Posterior cingulate gyrus (tissue), 11 donors: ENCODE measurements at regions of chr1 and their contacts with region 1.

Region 1: GRCh38 chr1:154272217-154272998 is at the start of gene HAX1:
- DNase-seq: peak; percentile 83 to 97 (median 90)

Region 2: DNA sequence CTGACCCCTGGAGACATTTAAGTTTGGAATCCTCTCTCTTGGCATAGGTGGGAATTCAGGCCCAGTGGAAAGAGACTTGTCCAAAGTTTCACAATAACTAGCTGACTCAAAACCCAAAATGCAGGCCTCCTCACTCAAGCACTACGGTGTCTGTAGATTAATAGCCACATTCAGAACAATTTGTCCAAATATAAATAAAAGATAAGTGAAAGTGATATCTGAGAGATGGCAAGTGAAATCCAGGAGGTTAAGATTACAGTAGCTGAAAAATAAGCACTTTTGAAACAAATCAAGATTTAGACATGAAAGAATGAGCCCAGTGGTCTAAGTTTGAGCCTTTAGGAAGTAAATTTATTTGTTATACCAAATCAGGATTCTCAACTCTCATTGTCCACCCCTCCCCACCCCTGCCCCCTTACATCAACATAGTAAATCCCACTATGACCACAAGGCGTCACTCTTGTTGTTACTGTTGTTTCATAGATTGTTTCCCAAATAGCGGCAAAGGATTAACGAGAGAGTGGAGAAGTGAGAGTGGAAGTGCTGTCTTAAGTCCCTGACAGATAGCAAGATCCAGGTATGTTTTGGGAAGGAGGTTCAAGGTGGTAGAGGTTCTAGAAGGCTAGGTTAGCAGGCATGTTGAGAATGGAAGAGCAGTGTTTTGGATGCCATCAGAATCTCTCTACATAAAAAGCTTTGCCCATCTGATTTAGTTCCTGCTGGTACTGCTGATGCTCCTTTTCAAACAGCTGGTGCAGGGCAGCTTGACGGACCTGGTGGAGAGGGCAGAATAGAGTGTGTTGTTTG is 73.4 kb before region 1 on chr1:
- intact Hi-C with region 1: loop called (anchors 5 kb)
- DNase-seq: peak in 2 of 10 donors; percentile 8 to 17

Region 3: GRCh38 chr1:154220071-154220969 is 52.1 kb before region 1 on chr1 and contains the start of gene UBAP2L:
- intact Hi-C with region 1: loop called (anchors 5 kb)
- DNase-seq: peak; percentile 98 to 100 (median 98)

Region 4: GRCh38 chr1:154256686-154257085 is 15.7 kb before region 1 on chr1:
- intact Hi-C with region 1: no loop called
- DNase-seq: no peak

Region 5: GRCh38 chr1:154501423-154502065 is 229.1 kb after region 1 on chr1:
- intact Hi-C with region 1: no loop called
- DNase-seq: no peak